CD4-positive, alpha-beta memory T cell (primary cell): ENCODE measurements at regions of chr1 and their contacts with region 1.

Region 1: DNA sequence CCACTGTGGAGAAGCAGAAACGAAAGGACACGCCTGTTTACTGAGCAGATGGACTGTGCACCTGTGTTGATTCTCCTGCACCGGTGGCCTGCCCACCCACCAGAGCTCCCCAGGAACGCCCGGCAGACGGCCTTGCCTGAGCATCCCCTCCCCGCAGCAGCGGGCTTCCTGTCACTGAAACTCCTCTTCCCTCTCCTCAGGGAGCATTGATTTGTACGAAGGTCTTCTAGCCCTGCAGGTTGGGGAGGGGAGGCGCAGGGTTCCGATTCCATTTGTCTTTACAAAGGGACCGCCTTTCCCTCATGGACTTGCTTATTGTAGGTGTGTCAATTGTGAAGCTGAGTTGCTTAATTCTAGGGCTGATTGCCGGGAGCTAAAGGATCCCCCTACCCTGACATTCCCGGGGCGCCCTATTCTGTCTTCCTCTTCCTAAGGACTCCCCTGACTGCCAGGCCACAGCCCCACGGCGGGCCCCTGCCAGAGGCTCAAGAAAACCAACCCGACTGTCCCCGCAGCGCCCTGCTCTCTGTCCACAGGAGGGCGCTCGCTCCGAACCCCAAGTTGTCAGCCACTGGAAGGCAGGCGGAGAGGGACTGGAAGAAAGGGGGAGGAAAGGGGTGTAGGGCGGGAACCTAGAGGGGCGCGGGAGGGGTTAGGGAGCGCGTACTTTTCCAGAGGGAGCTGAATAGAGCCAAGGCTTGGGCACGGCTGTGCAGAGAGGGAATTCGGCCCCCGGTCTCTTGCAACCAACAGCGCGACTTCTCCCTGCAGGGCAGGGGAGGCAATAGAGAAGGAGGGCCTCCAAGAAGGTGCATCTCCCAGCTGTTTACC is 2.8 kb downstream of the S100A6 start:
- DNase-seq: peak; percentile 76 to 82 (median 78)
- H3K4me3 ChIP-seq: peak overlapping the region; percentile 55 to 79
- H3K4me3 Mint-ChIP-seq: peak overlapping the region; percentile 88 to 98 (median 96)
- H3K27ac ChIP-seq: peak overlapping the region; percentile 92
- H3K27ac Mint-ChIP-seq: peak overlapping the region; percentile 88 to 98 (median 94)
- H3K4me1 ChIP-seq: peaks cover 62% of the 10 kb centered on the region
- H3K4me1 Mint-ChIP-seq: peaks cover 44 to 80% (median 57%) of the 10 kb centered on the region in 4 donors
- H3K27me3 ChIP-seq: no peaks in the 10 kb centered on the region
- H3K27me3 Mint-ChIP-seq: no peaks in the 10 kb centered on the region

Region 2: DNA sequence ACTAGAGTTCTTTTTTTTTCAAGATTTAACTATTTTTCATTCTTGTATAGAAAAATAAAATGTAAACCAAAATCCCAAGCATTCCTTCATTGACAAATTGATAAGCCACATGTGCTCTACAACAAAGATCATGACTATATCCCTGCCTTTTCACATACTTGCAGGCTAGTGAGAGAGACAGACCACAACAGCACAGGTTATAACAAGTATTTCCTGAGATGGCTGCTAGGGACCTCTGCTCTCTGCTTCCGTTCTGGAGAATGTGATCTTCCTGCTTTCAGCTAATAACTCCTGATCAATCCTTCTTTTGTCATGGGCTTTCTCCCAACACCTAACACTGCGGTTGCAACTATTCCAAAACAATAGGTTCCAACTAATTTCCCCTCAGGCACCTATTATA is 405.7 kb before region 1 on chr1:
- CTCF ChIA-PET with region 1: no interaction called
- POLR2A ChIA-PET with region 1: no interaction called
- intact Hi-C with region 1: no loop called
- DNase-seq: no peak
- H3K4me3 ChIP-seq: no peak overlapping the region
- H3K4me3 Mint-ChIP-seq: no peak overlapping the region
- H3K27ac ChIP-seq: no peak overlapping the region
- H3K27ac Mint-ChIP-seq: no peak overlapping the region
- H3K4me1 ChIP-seq: no peaks in the 10 kb centered on the region
- H3K4me1 Mint-ChIP-seq: no peaks in the 10 kb centered on the region
- H3K27me3 ChIP-seq: peaks cover 6% of the 10 kb centered on the region
- H3K27me3 Mint-ChIP-seq: peaks cover 7 to 8% of the 10 kb centered on the region in 2 donors

Region 3: GRCh38 chr1:153488731-153489130 is 44.3 kb before region 1 on chr1:
- CTCF ChIA-PET with region 1: no interaction called
- POLR2A ChIA-PET with region 1: no interaction called
- intact Hi-C with region 1: no loop called
- DNase-seq: no peak
- H3K4me3 ChIP-seq: no peak overlapping the region
- H3K4me3 Mint-ChIP-seq: no peak overlapping the region
- H3K27ac ChIP-seq: no peak overlapping the region
- H3K27ac Mint-ChIP-seq: no peak overlapping the region
- H3K4me1 ChIP-seq: no peaks in the 10 kb centered on the region
- H3K4me1 Mint-ChIP-seq: peaks cover 0 to 12% (median under 1%) of the 10 kb centered on the region in 4 donors
- H3K27me3 ChIP-seq: no peaks in the 10 kb centered on the region
- H3K27me3 Mint-ChIP-seq: peaks cover 16 to 25% of the 10 kb centered on the region in 2 donors

Region 4: GRCh38 chr1:153520230-153520629 is 12.8 kb before region 1 on chr1:
- CTCF ChIA-PET with region 1: interaction called, 38 read pairs
- POLR2A ChIA-PET with region 1: interaction called, 29 read pairs
- intact Hi-C with region 1: no loop called
- DNase-seq: no peak
- H3K4me3 ChIP-seq: no peak overlapping the region
- H3K4me3 Mint-ChIP-seq: peak overlapping the region in 1 of 8 donors; percentile 17
- H3K27ac ChIP-seq: no peak overlapping the region
- H3K27ac Mint-ChIP-seq: peak overlapping the region in 1 of 7 donors; percentile 52
- H3K4me1 ChIP-seq: peaks cover 10% of the 10 kb centered on the region
- H3K4me1 Mint-ChIP-seq: peaks cover 4 to 5% (median 5%) of the 10 kb centered on the region in 4 donors
- H3K27me3 ChIP-seq: no peaks in the 10 kb centered on the region
- H3K27me3 Mint-ChIP-seq: no peaks in the 10 kb centered on the region

Region 5: DNA sequence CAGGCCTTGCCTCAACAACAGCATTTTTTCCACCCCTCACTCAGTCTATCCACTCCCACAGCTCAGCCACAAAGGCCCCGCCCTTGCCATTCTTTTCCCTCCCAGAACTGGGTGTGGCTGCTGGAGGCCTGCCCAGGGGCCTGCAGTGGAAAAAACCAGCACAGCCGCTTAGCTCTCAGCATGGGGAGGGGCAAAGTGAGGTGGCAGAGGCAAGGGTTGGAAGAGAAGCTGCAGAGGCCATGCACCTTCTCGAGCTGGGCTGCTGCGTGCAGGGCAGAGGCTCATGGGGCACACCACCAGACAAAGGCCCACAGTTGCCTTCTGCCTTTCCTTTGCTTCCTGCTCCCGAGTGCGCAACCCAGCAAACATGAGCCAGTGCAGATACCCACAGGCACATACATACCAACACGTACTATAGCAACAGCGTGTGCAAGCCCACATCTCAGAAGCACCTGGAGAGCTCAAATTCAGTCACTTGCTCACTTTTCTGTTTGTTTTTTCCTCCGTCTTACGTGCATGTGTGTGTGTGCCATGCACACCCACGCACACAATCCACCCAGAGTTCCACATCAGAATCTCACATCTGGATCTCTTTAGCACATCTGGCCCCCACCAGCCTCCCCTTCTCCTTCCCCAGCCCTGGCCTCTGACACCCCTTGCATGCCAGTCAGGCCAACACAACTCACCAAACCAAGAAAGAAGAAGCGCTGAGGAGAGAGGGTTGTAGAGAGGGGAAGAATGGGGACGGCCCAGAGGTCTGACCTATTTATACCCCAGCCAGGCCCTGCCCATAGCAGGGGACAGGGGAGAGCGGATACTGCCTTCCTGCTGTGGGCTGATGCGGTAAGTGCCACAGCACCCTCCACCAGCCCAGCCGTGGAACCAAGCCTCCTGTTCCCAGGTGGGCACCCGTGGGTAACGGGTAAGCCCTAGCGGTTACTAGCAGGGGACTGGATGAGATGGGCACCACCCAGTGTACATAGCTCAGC is 12.4 kb after region 1 on chr1 and contains the start of gene S100A4:
- CTCF ChIA-PET with region 1: interaction called, 214 read pairs
- POLR2A ChIA-PET with region 1: interaction called, 631 read pairs
- intact Hi-C with region 1: loop called (anchors 1 kb)
- DNase-seq: peak; percentile 84 to 92 (median 89)
- H3K4me3 ChIP-seq: peak within 1 kb of the TSS; percentile 71 to 79
- H3K4me3 Mint-ChIP-seq: peak within 1 kb of the TSS; percentile 96 to 99 (median 98)
- H3K27ac ChIP-seq: peak within 1 kb of the TSS; percentile 74
- H3K27ac Mint-ChIP-seq: peak within 1 kb of the TSS; percentile 93 to 98 (median 97)
- H3K4me1 ChIP-seq: peaks cover 70% of the 10 kb centered on the region
- H3K4me1 Mint-ChIP-seq: peaks cover 49 to 81% (median 68%) of the 10 kb centered on the region in 4 donors
- H3K27me3 ChIP-seq: no peaks in the 10 kb centered on the region
- H3K27me3 Mint-ChIP-seq: no peaks in the 10 kb centered on the region
- total RNA-seq, gene S100A4: 329 to 346 TPM

Region 6: GRCh38 chr1:153566440-153567379 is 33.7 kb after region 1 on chr1:
- CTCF ChIA-PET with region 1: interaction called, 225 read pairs
- POLR2A ChIA-PET with region 1: interaction called, 173 read pairs
- intact Hi-C with region 1: loop called (anchors 1 kb)
- DNase-seq: peak; percentile 45 to 93 (median 55)
- H3K4me3 ChIP-seq: peak overlapping the region in 1 of 2 donors; percentile 16
- H3K4me3 Mint-ChIP-seq: peak overlapping the region in 7 of 8 donors; percentile 55 to 81 (median 65)
- H3K27ac ChIP-seq: peak overlapping the region; percentile 42
- H3K27ac Mint-ChIP-seq: peak overlapping the region; percentile 90 to 94 (median 92)
- H3K4me1 ChIP-seq: peaks cover 35% of the 10 kb centered on the region
- H3K4me1 Mint-ChIP-seq: peaks cover 22 to 36% (median 28%) of the 10 kb centered on the region in 4 donors
- H3K27me3 ChIP-seq: no peaks in the 10 kb centered on the region
- H3K27me3 Mint-ChIP-seq: no peaks in the 10 kb centered on the region

Region 7: DNA sequence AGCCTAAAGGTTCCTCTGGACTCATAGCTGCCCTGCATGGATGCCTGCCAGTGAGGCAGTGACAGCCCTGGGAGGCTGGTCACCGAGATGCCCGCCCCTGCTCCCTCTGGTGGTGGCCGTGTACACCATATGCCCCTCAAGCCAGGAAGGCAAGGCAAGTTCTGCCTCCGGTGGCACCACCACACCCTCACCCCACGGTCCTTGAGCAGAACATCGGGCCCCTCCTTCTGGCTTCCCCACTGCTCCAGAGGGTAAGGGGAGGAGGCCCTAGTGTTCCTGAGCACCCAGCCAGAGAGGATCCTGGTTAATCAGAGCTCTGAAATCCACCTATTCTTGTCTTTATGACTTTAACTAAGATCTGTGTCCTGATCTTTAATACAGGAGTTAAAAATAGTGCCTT is 84.7 kb after region 1 on chr1:
- CTCF ChIA-PET with region 1: interaction called, 21 read pairs
- POLR2A ChIA-PET with region 1: interaction called, 4 read pairs
- intact Hi-C with region 1: no loop called
- DNase-seq: peak in 3 of 5 donors; percentile 50 to 63 (median 55)
- H3K4me3 ChIP-seq: no peak overlapping the region
- H3K4me3 Mint-ChIP-seq: no peak overlapping the region
- H3K27ac ChIP-seq: no peak overlapping the region
- H3K27ac Mint-ChIP-seq: peak overlapping the region in 1 of 7 donors; percentile 4
- H3K4me1 ChIP-seq: no peaks in the 10 kb centered on the region
- H3K4me1 Mint-ChIP-seq: peaks cover 0 to 5% (median 0%) of the 10 kb centered on the region in 4 donors
- H3K27me3 ChIP-seq: no peaks in the 10 kb centered on the region
- H3K27me3 Mint-ChIP-seq: peaks cover 0 to 1% of the 10 kb centered on the region in 2 donors